ENCODE measurements at regions of chr16 and their contacts with region 1.

Region 1: DNA sequence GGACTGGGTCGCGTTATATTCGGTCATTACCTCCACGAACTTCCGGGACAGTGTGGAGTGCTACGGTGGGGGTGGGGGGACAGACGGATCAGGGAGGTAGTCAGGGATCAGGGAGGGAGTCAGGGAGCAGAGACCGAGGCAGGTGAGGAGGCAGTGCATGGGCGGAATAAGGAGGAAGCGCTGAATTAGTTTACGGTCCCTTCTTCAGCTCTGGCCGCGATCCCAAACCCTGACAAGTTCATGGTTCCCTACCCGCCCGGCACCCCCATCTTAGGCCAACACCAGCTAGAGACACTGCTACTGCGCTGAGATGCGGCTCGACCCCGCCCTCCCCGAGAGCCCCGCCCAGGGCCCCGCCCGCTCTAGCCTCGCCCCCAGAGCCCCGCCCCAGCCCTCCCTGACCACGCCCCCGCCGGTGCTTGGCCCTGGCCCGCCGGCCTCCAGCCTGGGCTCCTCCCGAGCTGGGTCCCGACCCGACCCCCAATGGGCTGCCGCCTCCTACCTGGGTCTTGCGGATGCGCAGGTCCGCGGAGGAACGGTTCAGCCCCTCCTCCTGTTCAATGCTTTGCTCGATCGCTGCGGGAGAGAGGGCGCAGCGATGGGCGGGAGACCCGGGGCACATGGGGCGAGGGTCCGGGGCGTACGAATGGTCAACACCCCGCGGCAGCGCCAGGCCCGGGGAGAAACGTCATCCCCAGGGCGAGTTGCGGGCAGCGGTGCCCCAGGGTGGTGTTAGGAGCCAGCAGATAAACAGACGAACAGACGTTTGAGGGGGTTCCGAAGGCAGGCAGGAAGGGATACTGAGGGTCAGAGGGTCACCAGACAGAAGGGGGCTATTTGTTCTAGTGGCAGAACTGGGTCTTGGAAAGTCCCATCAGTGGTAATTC is 12.2 kb downstream of the HSD3B7 start:
- DNase-seq: peak; percentile 88
- ATAC-seq: peak; percentile 100
- H3K4me3 ChIP-seq: peak overlapping the region in 4 of 5 experiments; percentile 54 to 72 (median 66)
- H3K4me3 Mint-ChIP-seq: peak overlapping the region; percentile 91
- H3K27ac ChIP-seq: peak overlapping the region; percentile 29 to 62
- H3K27ac Mint-ChIP-seq: peak overlapping the region; percentile 92
- H3K4me1 ChIP-seq: peaks cover 9 to 13% of the 10 kb centered on the region in 2 donors
- H3K4me1 Mint-ChIP-seq: peaks cover 9% of the 10 kb centered on the region
- H3K27me3 ChIP-seq: peaks cover 0 to 7% (median 0%) of the 10 kb centered on the region in 4 experiments
- H3K27me3 Mint-ChIP-seq: no peaks in the 10 kb centered on the region
- CTCF ChIP-seq: no peak

Region 2: GRCh38 chr16:30957456-30958174 is 39.6 kb before region 1 on chr16 and contains the start of gene SETD1A:
- CTCF ChIA-PET with region 1: no interaction called
- POLR2A ChIA-PET with region 1: no interaction called
- intact Hi-C with region 1: loop called (anchors 1 kb)
- DNase-seq: peak; percentile 99
- ATAC-seq: peak; percentile 83
- H3K4me3 ChIP-seq: peak within 1 kb of the TSS; percentile 85 to 99 (median 95)
- H3K4me3 Mint-ChIP-seq: peak within 1 kb of the TSS; percentile 97
- H3K27ac ChIP-seq: peak within 1 kb of the TSS; percentile 92 to 96
- H3K27ac Mint-ChIP-seq: peak within 1 kb of the TSS; percentile 99
- H3K4me1 ChIP-seq: peaks cover 15 to 25% of the 10 kb centered on the region in 2 donors
- H3K4me1 Mint-ChIP-seq: peaks cover 40% of the 10 kb centered on the region
- H3K27me3 ChIP-seq: no peaks in the 10 kb centered on the region
- H3K27me3 Mint-ChIP-seq: no peaks in the 10 kb centered on the region
- CTCF ChIP-seq: no peak
- total RNA-seq, gene SETD1A: 37.2 and 39.5 TPM in 2 replicates

Region 3: GRCh38 chr16:31134625-31135547 is 137.6 kb after region 1 on chr16:
- CTCF ChIA-PET with region 1: no interaction called
- POLR2A ChIA-PET with region 1: no interaction called
- intact Hi-C with region 1: no loop called
- DNase-seq: peak; percentile 4
- ATAC-seq: no peak
- H3K4me3 ChIP-seq: no peak overlapping the region
- H3K4me3 Mint-ChIP-seq: no peak overlapping the region
- H3K27ac ChIP-seq: no peak overlapping the region
- H3K27ac Mint-ChIP-seq: no peak overlapping the region
- H3K4me1 ChIP-seq: no peaks in the 10 kb centered on the region
- H3K4me1 Mint-ChIP-seq: no peaks in the 10 kb centered on the region
- H3K27me3 ChIP-seq: no peaks in the 10 kb centered on the region
- H3K27me3 Mint-ChIP-seq: no peaks in the 10 kb centered on the region
- CTCF ChIP-seq: no peak